Left ventricle myocardium superior (tissue), 1 donor: ENCODE measurements at regions of chr11 and their contacts with region 1.

Region 1: GRCh38 chr11:130434521-130435223 is 6.3 kb upstream of the ADAMTS8 start:
- DNase-seq: peak; percentile 79
- ATAC-seq: peak; percentile 92

Region 2: GRCh38 chr11:130861902-130862860 is 427.5 kb after region 1 on chr11:
- intact Hi-C with region 1: loop called (anchors 2 kb)
- DNase-seq: peak; percentile 95
- ATAC-seq: peak; percentile 47

Region 3: GRCh38 chr11:130894322-130895025 is 459.8 kb after region 1 on chr11:
- intact Hi-C with region 1: loop called (anchors 10 kb)
- DNase-seq: peak; percentile 79
- ATAC-seq: peak; percentile 43